Prostate gland (tissue), 2 donors: ENCODE measurements at regions of chr11 and their contacts with region 1.

Region 1: DNA sequence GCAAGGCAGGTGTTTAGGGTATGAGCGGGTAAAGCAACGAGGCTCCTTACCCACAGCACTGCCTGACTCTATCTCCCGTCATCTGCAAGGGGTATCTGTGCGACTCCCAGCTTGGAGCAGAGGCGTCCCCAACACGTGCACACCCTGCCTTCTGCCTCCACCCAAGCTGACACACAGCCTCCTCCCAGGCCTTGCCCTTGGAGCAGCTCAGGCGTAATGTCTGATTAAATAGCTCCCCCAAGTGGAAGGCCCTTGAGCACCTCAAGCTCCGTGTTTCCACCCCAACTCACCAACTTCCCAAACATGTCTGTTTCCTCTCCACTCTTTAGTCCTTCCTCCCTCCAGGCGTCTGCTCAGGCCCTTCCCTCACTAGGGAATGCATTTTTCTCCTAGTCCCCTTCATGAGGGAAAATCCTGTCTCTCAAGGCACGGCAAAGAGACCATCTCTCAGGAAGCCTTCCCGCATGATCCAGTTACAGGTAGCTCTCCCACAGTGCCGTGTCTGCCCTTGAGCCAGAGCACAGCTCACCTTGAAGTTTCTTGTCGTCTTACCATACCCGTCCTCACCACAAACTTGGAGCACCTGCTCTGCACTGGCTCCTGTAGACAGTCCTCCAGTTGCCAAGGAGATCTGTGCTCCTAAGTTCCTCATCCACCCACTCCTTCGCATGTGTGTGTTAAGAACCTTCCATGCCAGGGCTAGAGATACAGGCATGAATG is 15.8 kb downstream of the CYB5R2 start:
- DNase-seq: peak; percentile 56
- H3K4me3 ChIP-seq: no peak overlapping the region
- H3K27ac ChIP-seq: no peak overlapping the region
- H3K4me1 ChIP-seq: no peaks in the 10 kb centered on the region
- H3K27me3 ChIP-seq: no peaks in the 10 kb centered on the region
- CTCF ChIP-seq: peak in 3 of 4 experiments; percentile 35 to 66 (median 60)
- POLR2A ChIP-seq: no peak

Region 2: GRCh38 chr11:7457211-7457610 is 200.3 kb before region 1 on chr11:
- intact Hi-C with region 1: loop called (anchors 10 kb)
- DNase-seq: no peak
- H3K4me3 ChIP-seq: no peak overlapping the region
- H3K27ac ChIP-seq: no peak overlapping the region
- H3K4me1 ChIP-seq: no peaks in the 10 kb centered on the region
- H3K27me3 ChIP-seq: no peaks in the 10 kb centered on the region
- CTCF ChIP-seq: no peak
- POLR2A ChIP-seq: no peak